CD8-positive, alpha-beta T cell (primary cell): ENCODE measurements at regions of chr11 and their contacts with region 1.

Region 1: DNA sequence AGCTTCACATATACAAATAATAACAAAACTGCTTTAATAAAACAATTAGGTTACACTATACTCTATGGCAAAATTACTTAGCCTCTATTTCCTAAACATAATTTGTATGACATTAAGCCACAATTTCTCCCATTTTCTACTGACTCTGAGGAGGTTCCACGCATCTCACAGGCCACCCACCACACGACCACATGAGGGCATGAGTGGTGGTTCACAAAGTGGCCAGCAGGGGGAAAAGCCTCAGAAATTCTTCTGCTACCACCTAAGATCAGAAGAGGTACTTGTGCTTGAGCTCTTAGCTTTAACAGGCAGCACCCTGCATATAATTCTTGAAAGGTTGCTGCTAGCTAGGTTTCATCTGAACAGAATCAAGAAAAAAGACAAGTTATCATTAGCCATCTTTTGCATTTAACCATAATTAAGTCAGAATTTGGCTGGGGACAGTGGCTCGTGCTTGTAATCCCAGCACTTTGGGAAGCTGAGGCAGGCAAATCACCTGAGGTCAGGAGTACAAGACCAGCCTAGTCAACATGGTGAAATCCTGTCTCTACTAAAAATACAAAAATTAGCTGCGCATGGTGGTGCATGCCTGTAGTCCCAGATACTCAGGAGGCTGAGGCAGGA is 7.7 kb downstream of the LPXN start:
- DNase-seq: peak; percentile 59 to 90 (median 81)
- ATAC-seq: peak; percentile 100
- H3K4me3 ChIP-seq: no peak overlapping the region
- H3K4me3 Mint-ChIP-seq: peak overlapping the region; percentile 40
- H3K27ac ChIP-seq: peak overlapping the region in 1 of 2 experiments; percentile 6
- H3K27ac Mint-ChIP-seq: peak overlapping the region; percentile 85
- H3K4me1 ChIP-seq: peaks cover 61% of the 10 kb centered on the region
- H3K4me1 Mint-ChIP-seq: peaks cover 70% of the 10 kb centered on the region
- H3K27me3 ChIP-seq: no peaks in the 10 kb centered on the region
- H3K27me3 Mint-ChIP-seq: no peaks in the 10 kb centered on the region
- CTCF ChIP-seq: peak; percentile 87

Region 2: GRCh38 chr11:58222721-58223120 is 345.3 kb before region 1 on chr11:
- CTCF ChIA-PET with region 1: no interaction called
- POLR2A ChIA-PET with region 1: no interaction called
- intact Hi-C with region 1: no loop called
- DNase-seq: no peak
- ATAC-seq: no peak
- H3K4me3 ChIP-seq: no peak overlapping the region
- H3K4me3 Mint-ChIP-seq: no peak overlapping the region
- H3K27ac ChIP-seq: no peak overlapping the region
- H3K27ac Mint-ChIP-seq: no peak overlapping the region
- H3K4me1 ChIP-seq: no peaks in the 10 kb centered on the region
- H3K4me1 Mint-ChIP-seq: no peaks in the 10 kb centered on the region
- H3K27me3 ChIP-seq: no peaks in the 10 kb centered on the region
- H3K27me3 Mint-ChIP-seq: peaks cover 13% of the 10 kb centered on the region
- CTCF ChIP-seq: no peak

Region 3: GRCh38 chr11:58530236-58530635 is 37.8 kb before region 1 on chr11:
- CTCF ChIA-PET with region 1: interaction called, 48 read pairs
- POLR2A ChIA-PET with region 1: interaction called, 8 read pairs
- intact Hi-C with region 1: no loop called
- DNase-seq: peak; percentile 22 to 76 (median 59)
- ATAC-seq: peak; percentile 79
- H3K4me3 ChIP-seq: peak overlapping the region in 1 of 2 experiments; percentile 31
- H3K4me3 Mint-ChIP-seq: peak overlapping the region; percentile 47
- H3K27ac ChIP-seq: peak overlapping the region; percentile 43 to 45
- H3K27ac Mint-ChIP-seq: peak overlapping the region; percentile 93
- H3K4me1 ChIP-seq: peaks cover 42% of the 10 kb centered on the region
- H3K4me1 Mint-ChIP-seq: peaks cover 71% of the 10 kb centered on the region
- H3K27me3 ChIP-seq: no peaks in the 10 kb centered on the region
- H3K27me3 Mint-ChIP-seq: no peaks in the 10 kb centered on the region
- CTCF ChIP-seq: no peak

Region 4: DNA sequence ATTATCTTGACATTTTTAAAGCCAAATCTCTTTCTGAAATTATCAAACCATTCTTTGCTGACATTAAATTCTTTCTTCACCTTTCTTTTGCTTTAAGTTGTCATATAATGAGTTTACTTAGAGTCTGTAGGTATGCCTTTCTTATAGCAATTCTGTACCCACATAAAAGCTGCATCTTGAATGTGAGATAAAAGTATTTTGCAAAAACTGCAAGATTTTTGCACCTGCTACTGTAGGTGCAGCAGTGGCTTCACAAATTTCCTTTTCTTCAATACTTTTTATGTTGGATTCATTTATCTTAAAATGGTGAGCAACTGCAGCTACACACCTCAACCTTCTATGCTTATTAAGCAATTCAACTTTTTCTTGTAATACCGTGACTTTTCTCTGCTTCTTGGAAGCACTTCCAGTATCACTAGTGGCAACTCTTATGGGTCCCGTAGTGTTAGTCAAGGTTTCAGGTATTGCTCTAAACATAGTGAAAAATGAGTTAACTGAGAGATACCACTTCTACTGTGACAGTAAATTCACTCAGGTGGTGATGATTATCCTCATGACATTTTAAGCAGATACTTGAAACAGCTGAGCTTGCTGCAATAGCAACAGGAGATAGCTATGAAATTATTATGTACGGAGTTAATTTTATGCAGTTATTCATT is 29.6 kb after region 1 on chr11:
- CTCF ChIA-PET with region 1: interaction called, 19 read pairs
- POLR2A ChIA-PET with region 1: interaction called, 3 read pairs
- intact Hi-C with region 1: loop called in 1 of 2 experiments (anchors 5 kb)
- DNase-seq: no peak
- ATAC-seq: no peak
- H3K4me3 ChIP-seq: no peak overlapping the region
- H3K4me3 Mint-ChIP-seq: peak overlapping the region; percentile 49
- H3K27ac ChIP-seq: no peak overlapping the region
- H3K27ac Mint-ChIP-seq: peak overlapping the region; percentile 87
- H3K4me1 ChIP-seq: peaks cover 43% of the 10 kb centered on the region
- H3K4me1 Mint-ChIP-seq: peaks cover 89% of the 10 kb centered on the region
- H3K27me3 ChIP-seq: no peaks in the 10 kb centered on the region
- H3K27me3 Mint-ChIP-seq: no peaks in the 10 kb centered on the region
- CTCF ChIP-seq: no peak

Region 5: GRCh38 chr11:58629857-58630256 is 61.9 kb after region 1 on chr11:
- CTCF ChIA-PET with region 1: interaction called, 35 read pairs
- POLR2A ChIA-PET with region 1: interaction called, 3 read pairs
- intact Hi-C with region 1: loop called in 1 of 2 experiments (anchors 1 kb)
- DNase-seq: peak in 3 of 9 experiments; percentile 11 to 57 (median 43)
- ATAC-seq: no peak
- H3K4me3 ChIP-seq: no peak overlapping the region
- H3K4me3 Mint-ChIP-seq: no peak overlapping the region
- H3K27ac ChIP-seq: no peak overlapping the region
- H3K27ac Mint-ChIP-seq: no peak overlapping the region
- H3K4me1 ChIP-seq: no peaks in the 10 kb centered on the region
- H3K4me1 Mint-ChIP-seq: no peaks in the 10 kb centered on the region
- H3K27me3 ChIP-seq: no peaks in the 10 kb centered on the region
- H3K27me3 Mint-ChIP-seq: no peaks in the 10 kb centered on the region
- CTCF ChIP-seq: peak; percentile 53

Region 6: DNA sequence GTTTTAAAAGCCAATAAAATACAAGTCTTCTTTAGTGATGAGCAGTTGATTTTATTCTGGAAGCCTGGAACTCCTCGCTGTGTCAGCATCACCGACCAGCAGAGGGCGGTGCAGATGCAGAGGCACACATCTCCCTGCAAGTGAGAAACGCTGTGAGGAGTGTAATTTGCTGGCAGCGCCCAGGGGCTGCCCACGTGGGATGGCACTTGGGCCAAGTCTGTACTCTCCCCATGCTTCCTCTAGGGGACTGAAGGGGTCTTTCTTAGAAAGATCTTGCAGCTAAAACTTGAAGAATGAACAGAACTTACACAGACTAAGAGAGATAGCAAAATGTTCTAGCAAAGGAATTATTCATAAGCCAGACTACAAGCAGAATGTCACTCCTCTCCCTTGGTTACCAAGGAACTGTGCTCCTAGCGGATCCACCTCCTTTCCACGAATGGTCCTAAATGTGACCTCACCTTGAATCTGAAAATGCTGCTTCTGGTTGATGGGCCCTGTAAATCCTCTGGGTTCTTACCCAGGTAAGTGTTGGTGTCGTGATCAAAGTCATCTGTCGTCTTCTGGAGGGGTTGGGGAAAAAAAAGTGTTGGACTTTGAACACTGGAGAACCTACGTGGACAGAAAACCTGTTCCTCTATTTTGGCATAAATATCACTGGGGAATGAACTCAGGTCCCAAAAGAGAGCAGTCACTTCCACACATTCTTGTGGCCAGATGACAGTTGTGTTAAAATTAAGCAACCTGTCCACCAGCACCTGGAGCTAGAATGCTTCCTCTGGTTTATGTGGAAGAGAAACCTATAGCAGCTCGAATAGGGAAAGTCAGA is 86.3 kb after region 1 on chr11:
- CTCF ChIA-PET with region 1: interaction called, 21 read pairs
- POLR2A ChIA-PET with region 1: no interaction called
- intact Hi-C with region 1: no loop called
- DNase-seq: peak; percentile 53 to 85 (median 79)
- ATAC-seq: peak; percentile 98
- H3K4me3 ChIP-seq: no peak overlapping the region
- H3K4me3 Mint-ChIP-seq: no peak overlapping the region
- H3K27ac ChIP-seq: no peak overlapping the region
- H3K27ac Mint-ChIP-seq: no peak overlapping the region
- H3K4me1 ChIP-seq: no peaks in the 10 kb centered on the region
- H3K4me1 Mint-ChIP-seq: peaks cover 4% of the 10 kb centered on the region
- H3K27me3 ChIP-seq: no peaks in the 10 kb centered on the region
- H3K27me3 Mint-ChIP-seq: no peaks in the 10 kb centered on the region
- CTCF ChIP-seq: peak; percentile 82

Region 7: GRCh38 chr11:58788355-58789023 is 220.5 kb after region 1 on chr11:
- CTCF ChIA-PET with region 1: interaction called, 9 read pairs
- POLR2A ChIA-PET with region 1: no interaction called
- intact Hi-C with region 1: loop called (anchors 5 kb)
- DNase-seq: peak in 8 of 9 experiments; percentile 13 to 65 (median 48)
- ATAC-seq: peak; percentile 90
- H3K4me3 ChIP-seq: no peak overlapping the region
- H3K4me3 Mint-ChIP-seq: no peak overlapping the region
- H3K27ac ChIP-seq: no peak overlapping the region
- H3K27ac Mint-ChIP-seq: no peak overlapping the region
- H3K4me1 ChIP-seq: no peaks in the 10 kb centered on the region
- H3K4me1 Mint-ChIP-seq: peaks cover 3% of the 10 kb centered on the region
- H3K27me3 ChIP-seq: no peaks in the 10 kb centered on the region
- H3K27me3 Mint-ChIP-seq: peaks cover 4% of the 10 kb centered on the region
- CTCF ChIP-seq: peak; percentile 91